Activated naive CD4-positive, alpha-beta T cell treated with anti-CD3 and anti-CD28 coated beads for 36 hours (primary cell): ENCODE measurements at regions of chr9 and their contacts with region 1.

Region 1: GRCh38 chr9:108933718-108934322 is at the start of gene ELP1:
- DNase-seq: peak; percentile 94
- H3K4me3 Mint-ChIP-seq: peak within 1 kb of the TSS; percentile 95
- H3K27ac Mint-ChIP-seq: peak within 1 kb of the TSS; percentile 92
- H3K4me1 Mint-ChIP-seq: peaks cover 27% of the 10 kb centered on the region
- H3K27me3 Mint-ChIP-seq: no peaks in the 10 kb centered on the region
- total RNA-seq, gene ELP1: 22.3 to 27.3 TPM

Region 2: GRCh38 chr9:107489687-107490605 is 1443.9 kb before region 1 on chr9 and contains the start of gene KLF4:
- CTCF ChIA-PET with region 1: no interaction called
- intact Hi-C with region 1: loop called (anchors 1 kb)
- DNase-seq: peak; percentile 81
- H3K4me3 Mint-ChIP-seq: peak within 1 kb of the TSS; percentile 65
- H3K27ac Mint-ChIP-seq: no peak within 1 kb of the TSS
- H3K4me1 Mint-ChIP-seq: peaks cover 7% of the 10 kb centered on the region
- H3K27me3 Mint-ChIP-seq: peaks cover 66% of the 10 kb centered on the region
- total RNA-seq, gene KLF4: 3.4 TPM

Region 3: GRCh38 chr9:108621991-108622855 is 311.6 kb before region 1 on chr9:
- CTCF ChIA-PET with region 1: no interaction called
- intact Hi-C with region 1: no loop called
- DNase-seq: no peak
- H3K4me3 Mint-ChIP-seq: no peak overlapping the region
- H3K27ac Mint-ChIP-seq: no peak overlapping the region
- H3K4me1 Mint-ChIP-seq: no peaks in the 10 kb centered on the region
- H3K27me3 Mint-ChIP-seq: peaks cover 3% of the 10 kb centered on the region

Region 4: DNA sequence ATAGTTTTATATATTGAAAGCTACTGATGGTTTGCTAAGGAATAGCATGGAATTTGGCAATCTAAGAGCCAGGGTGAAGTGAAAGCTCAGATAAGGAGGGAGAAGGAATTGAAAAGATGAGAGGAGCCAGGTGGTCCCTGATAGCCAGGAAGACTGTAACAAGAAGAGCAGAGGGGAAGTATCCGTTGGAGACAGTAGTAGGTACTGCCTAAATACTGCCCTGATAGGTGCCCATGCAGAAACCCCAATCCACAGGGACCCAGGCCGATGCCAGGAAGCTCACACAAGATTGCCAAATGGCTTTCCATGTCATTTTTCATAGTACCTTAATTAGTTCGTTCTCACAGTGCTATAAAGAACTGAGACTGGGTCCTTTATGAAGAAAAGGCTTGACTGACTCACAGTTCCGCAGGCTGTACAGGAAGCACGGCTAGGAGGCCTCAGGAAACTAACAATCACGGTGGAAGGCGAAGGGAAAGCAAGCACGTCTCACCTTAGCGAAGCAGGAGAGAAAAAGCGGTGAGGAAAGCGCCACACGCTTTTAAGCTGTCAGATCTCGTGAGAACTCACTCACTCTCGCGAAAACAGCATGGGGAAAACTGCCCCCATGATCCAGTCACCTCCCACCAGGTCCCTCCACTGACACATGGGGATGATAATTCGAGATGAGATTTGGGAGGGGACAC is 91.1 kb before region 1 on chr9:
- CTCF ChIA-PET with region 1: no interaction called
- intact Hi-C with region 1: loop called (anchors 1 kb)
- DNase-seq: peak; percentile 69
- H3K4me3 Mint-ChIP-seq: peak overlapping the region; percentile 64
- H3K27ac Mint-ChIP-seq: peak overlapping the region; percentile 50
- H3K4me1 Mint-ChIP-seq: peaks cover 21% of the 10 kb centered on the region
- H3K27me3 Mint-ChIP-seq: no peaks in the 10 kb centered on the region

Region 5: GRCh38 chr9:108850293-108850897 is 83.4 kb before region 1 on chr9:
- CTCF ChIA-PET with region 1: no interaction called
- intact Hi-C with region 1: loop called (anchors 1 kb)
- DNase-seq: no peak
- H3K4me3 Mint-ChIP-seq: no peak overlapping the region
- H3K27ac Mint-ChIP-seq: no peak overlapping the region
- H3K4me1 Mint-ChIP-seq: no peaks in the 10 kb centered on the region
- H3K27me3 Mint-ChIP-seq: no peaks in the 10 kb centered on the region

Region 6: DNA sequence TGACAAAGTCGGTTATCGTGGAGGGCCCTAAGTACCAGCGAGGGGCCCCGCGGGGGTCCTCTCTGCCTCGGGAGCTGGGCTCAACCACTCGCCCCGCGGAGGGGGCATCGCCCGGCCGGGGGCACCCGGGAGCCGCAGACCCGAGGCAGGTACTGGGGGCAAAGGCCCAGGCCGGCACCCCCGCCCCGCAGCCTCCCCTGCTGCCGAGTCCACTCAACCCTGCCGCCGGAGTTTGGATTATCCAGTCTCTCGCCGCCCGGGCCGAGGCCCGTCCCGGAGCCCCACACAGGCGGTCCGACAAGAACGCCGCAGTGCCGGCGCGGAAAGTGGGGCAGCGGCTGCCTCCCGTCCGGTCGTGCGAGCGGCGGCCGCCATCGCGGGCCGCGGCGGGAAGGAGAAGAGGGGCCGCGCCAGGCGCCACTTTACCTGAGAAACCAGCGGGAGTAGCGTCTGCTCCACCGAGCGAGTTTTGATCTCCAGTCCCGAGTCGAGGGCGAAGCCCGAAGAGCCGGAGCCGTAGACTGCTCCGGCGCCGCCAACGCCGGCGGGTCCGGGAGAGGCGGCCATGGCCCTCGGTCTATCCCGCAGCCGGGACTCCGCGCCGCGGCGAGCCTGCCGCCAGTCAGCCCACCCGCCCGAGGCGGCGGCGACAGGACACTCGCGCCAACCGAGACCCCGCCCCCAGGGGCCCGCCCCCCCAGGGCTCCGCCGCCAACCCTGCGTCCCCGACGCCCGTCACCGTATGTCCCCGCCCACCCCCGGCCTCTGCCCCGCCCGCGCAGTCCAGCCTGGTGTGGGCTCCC is 79.3 kb after region 1 on chr9 and contains the start of gene CTNNAL1:
- CTCF ChIA-PET with region 1: no interaction called
- intact Hi-C with region 1: loop called (anchors 1 kb)
- DNase-seq: peak; percentile 86
- H3K4me3 Mint-ChIP-seq: peak within 1 kb of the TSS; percentile 95
- H3K27ac Mint-ChIP-seq: peak within 1 kb of the TSS; percentile 68
- H3K4me1 Mint-ChIP-seq: peaks cover 28% of the 10 kb centered on the region
- H3K27me3 Mint-ChIP-seq: no peaks in the 10 kb centered on the region
- total RNA-seq, gene CTNNAL1: 18.4 to 19.0 TPM

Region 7: DNA sequence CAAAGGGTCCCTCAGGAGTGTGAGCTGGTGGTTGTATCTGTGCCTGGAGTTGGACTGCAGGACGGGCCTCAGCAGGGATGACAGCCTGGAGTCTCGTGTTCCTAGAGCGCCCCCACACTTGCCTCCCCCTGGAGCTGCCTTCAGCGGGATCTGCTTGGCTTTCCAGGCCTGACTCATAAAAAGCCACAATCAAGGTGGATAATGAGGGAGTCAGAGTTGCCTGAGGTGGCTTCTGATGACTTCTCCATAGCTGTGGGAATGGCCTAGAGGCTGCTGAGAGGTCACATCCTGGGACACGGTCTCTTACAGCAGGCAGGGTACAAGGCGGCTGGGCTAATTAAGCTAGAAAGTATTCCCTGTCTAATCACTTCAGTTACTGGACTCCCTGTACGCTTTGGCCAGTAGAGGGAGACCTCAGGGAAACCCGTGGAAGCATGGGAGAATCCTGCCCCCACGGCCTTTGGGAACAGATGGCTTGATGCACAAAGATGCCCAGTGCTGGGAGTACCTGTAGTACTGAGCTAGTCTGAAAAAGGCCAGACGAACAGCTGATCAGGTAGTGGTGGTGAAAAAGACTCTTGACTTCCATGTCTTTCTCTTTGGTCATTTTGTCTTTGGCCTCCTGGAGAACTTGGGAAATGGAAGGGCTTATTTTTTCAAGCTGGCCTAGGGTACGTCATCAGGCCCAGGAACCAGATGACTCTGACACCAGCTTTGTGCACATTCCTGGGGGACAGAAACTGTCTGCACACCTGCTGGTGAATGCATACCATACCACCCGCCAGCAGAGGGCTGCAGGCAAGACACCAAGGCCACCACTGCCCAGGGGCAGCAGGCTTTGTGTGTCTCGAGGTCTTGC is 249.3 kb after region 1 on chr9:
- CTCF ChIA-PET with region 1: no interaction called
- intact Hi-C with region 1: loop called (anchors 5 kb)
- DNase-seq: peak; percentile 23
- H3K4me3 Mint-ChIP-seq: no peak overlapping the region
- H3K27ac Mint-ChIP-seq: no peak overlapping the region
- H3K4me1 Mint-ChIP-seq: peaks cover 15% of the 10 kb centered on the region
- H3K27me3 Mint-ChIP-seq: peaks cover 3% of the 10 kb centered on the region

Region 8: GRCh38 chr9:109320742-109321448 is 387.1 kb after region 1 on chr9 and contains the start of gene EPB41L4B:
- CTCF ChIA-PET with region 1: no interaction called
- intact Hi-C with region 1: loop called (anchors 1 kb)
- DNase-seq: peak; percentile 95
- H3K4me3 Mint-ChIP-seq: peak within 1 kb of the TSS; percentile 69
- H3K27ac Mint-ChIP-seq: no peak within 1 kb of the TSS
- H3K4me1 Mint-ChIP-seq: peaks cover 10% of the 10 kb centered on the region
- H3K27me3 Mint-ChIP-seq: peaks cover 50% of the 10 kb centered on the region
- total RNA-seq, gene EPB41L4B: 0.24 to 0.25 TPM